GM10248 (cell line): ENCODE measurements at regions of chr18 and their contacts with region 1.

Region 1: GRCh38 chr18:32276906-32277305 is 87.1 kb downstream of the MEP1B start:
- DNase-seq: no peak
- CTCF ChIP-seq: no peak

Region 2: DNA sequence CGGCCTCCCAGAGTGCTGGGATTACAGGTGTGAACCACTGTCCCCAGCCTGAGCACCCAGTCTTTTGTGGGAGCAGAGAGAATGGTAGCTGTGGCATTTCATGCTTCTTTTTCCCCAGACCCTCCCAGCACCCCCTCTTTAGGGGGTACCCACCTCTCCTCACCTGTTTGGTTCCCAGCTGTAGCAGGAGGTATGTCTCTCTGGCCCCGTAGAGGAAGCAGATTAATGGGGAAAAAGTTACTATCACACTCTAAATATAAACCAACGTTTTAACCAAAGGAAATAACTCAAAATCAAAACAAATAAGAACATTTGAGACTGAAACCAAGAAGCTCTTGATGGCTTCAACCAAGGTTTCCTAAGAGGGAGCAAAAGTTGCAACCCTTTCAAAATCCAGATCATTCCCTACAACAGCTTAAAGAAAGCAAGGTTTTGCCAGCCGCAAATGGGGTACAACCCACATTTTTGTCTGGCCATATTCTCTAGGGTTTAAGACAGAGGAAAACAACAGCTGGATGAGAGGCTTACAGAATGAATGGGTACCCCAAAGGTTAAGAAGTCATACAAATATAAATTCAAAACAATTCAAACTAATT is 250.3 kb before region 1 on chr18:
- CTCF ChIA-PET with region 1: no interaction called
- POLR2A ChIA-PET with region 1: no interaction called
- DNase-seq: no peak
- CTCF ChIP-seq: no peak

Region 3: DNA sequence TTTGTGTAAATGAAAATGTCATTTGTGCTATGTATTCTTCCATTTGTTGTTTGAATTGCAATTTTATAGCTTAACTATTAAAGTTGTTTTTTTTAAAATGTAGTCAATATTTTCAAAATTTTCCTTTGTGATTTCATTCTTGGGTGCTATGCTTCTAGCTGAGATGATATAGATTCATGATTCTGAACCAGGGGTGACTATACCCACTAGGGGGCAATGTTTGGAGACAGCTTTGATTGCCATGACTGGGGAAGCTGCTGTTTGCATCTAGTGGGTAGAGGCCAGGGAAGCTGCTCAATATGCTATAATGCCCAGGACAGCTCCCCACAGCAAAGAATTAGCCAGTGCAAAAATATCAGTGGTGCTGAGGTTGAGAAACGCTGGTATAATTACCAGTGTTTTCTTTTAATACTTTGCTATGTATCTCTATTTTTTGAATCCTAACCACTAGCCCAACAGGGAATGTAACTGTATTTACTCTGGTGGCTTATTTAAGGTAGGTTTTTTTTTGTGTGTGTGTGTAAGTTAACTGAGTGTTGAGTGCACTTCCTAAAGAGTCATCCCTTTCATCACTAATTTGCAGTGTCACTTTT is 12.7 kb after region 1 on chr18:
- CTCF ChIA-PET with region 1: interaction called, 25 read pairs
- POLR2A ChIA-PET with region 1: no interaction called
- DNase-seq: peak; percentile 41
- CTCF ChIP-seq: peak; percentile 54